OCI-LY7 (cell line): ENCODE measurements at regions of chr7 and their contacts with region 1.

Region 1: GRCh38 chr7:28660132-28660531 is 247.8 kb downstream of the CREB5 start:
- DNase-seq: no peak
- H3K4me3 ChIP-seq: no peak overlapping the region
- H3K27ac ChIP-seq: no peak overlapping the region
- H3K4me1 ChIP-seq: no peaks in the 10 kb centered on the region
- CTCF ChIP-seq: no peak

Region 2: GRCh38 chr7:28705350-28705749 is 45.2 kb after region 1 on chr7:
- CTCF ChIA-PET with region 1: no interaction called
- POLR2A ChIA-PET with region 1: interaction called, 10 read pairs
- intact Hi-C with region 1: no loop called
- DNase-seq: peak; percentile 37
- H3K4me3 ChIP-seq: no peak overlapping the region
- H3K27ac ChIP-seq: no peak overlapping the region
- H3K4me1 ChIP-seq: peaks cover 16% of the 10 kb centered on the region
- CTCF ChIP-seq: no peak

Region 3: GRCh38 chr7:28891192-28891872 is 231.2 kb after region 1 on chr7:
- CTCF ChIA-PET with region 1: no interaction called
- POLR2A ChIA-PET with region 1: no interaction called
- intact Hi-C with region 1: no loop called
- DNase-seq: no peak
- H3K4me3 ChIP-seq: no peak overlapping the region
- H3K27ac ChIP-seq: no peak overlapping the region
- H3K4me1 ChIP-seq: no peaks in the 10 kb centered on the region
- CTCF ChIP-seq: no peak

Region 4: DNA sequence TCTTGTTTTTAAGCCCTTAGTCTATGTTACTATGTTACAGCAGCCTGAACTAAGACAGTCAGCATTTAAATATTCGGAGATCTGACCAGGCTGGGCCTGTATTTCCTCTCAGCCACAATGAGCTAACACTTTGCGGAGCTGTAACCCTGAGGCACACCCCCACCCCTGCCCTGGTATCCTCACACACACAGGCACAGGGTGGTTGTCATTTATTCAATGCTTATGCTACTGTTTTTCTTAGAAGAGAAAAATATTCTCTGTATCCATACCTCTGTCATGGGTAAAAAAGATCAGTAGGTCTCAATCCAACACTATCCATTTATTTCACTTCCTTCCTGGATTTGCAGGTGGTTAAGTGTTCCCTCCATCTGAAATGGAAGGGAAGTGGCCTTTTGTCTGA is 378.3 kb after region 1 on chr7:
- CTCF ChIA-PET with region 1: no interaction called
- POLR2A ChIA-PET with region 1: no interaction called
- intact Hi-C with region 1: no loop called
- DNase-seq: no peak
- H3K4me3 ChIP-seq: no peak overlapping the region
- H3K27ac ChIP-seq: no peak overlapping the region
- H3K4me1 ChIP-seq: no peaks in the 10 kb centered on the region
- CTCF ChIP-seq: no peak

Region 5: GRCh38 chr7:29091715-29092114 is 431.6 kb after region 1 on chr7:
- CTCF ChIA-PET with region 1: no interaction called
- POLR2A ChIA-PET with region 1: no interaction called
- intact Hi-C with region 1: no loop called
- DNase-seq: no peak
- H3K4me3 ChIP-seq: no peak overlapping the region
- H3K27ac ChIP-seq: no peak overlapping the region
- H3K4me1 ChIP-seq: no peaks in the 10 kb centered on the region
- CTCF ChIP-seq: no peak

Region 6: GRCh38 chr7:29900745-29901144 is 1240.6 kb after region 1 on chr7:
- CTCF ChIA-PET with region 1: no interaction called
- POLR2A ChIA-PET with region 1: interaction called, 11 read pairs
- intact Hi-C with region 1: no loop called
- DNase-seq: no peak
- H3K4me3 ChIP-seq: no peak overlapping the region
- H3K27ac ChIP-seq: no peak overlapping the region
- H3K4me1 ChIP-seq: no peaks in the 10 kb centered on the region
- CTCF ChIP-seq: no peak